Activated T-helper 1 cell treated with anti-CD3 and anti-CD28 coated beads, Interleukin-12 subunit alpha, Interleukin-12 subunit beta, Interleukin-2, Interleukin-4 antibody, amounts not matched to agents 30 ng/mL and 10 ng/mL and 1 ng/mL, durations not matched to agents 14 hours and 24 hours and 36 hours (primary cell): ENCODE measurements at regions of chr5 and their contacts with region 1.

Region 1: GRCh38 chr5:157858527-157859226 is at the start of gene CLINT1:
- DNase-seq: peak; percentile 86
- H3K4me3 Mint-ChIP-seq: peak within 1 kb of the TSS; percentile 90
- H3K27ac Mint-ChIP-seq: peak within 1 kb of the TSS; percentile 92
- H3K4me1 Mint-ChIP-seq: peaks cover 71% of the 10 kb centered on the region
- H3K27me3 Mint-ChIP-seq: no peaks in the 10 kb centered on the region
- total RNA-seq, gene CLINT1: 90.5 and 93.1 TPM in 2 replicates

Region 2: DNA sequence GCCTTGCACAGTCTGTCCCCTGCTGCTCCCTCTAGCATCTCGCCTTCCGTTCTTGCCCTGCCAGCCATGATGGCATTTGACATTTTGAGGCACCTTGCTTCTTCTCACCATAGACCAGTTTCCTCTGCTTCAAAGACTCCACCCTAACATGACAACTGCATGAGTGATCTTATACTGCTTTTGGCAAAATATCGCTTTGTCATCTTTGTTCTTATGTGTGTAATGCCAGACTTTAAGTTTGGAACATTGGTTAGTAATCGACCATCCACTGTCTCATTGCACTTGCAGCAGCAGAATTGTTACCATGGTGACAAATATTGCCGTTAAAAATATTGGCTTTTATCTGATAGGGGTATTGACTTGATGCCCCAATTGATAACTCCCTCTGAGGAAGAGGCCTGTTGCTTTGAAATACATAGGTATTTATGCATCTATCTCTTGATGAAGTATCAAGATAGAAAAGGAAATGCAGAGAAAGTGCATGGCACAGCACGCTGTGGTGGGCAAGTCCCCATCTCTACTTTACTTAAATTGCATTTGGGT is 699.4 kb before region 1 on chr5:
- intact Hi-C with region 1: no loop called
- DNase-seq: no peak
- H3K4me3 Mint-ChIP-seq: peak overlapping the region; percentile 49
- H3K27ac Mint-ChIP-seq: peak overlapping the region; percentile 86
- H3K4me1 Mint-ChIP-seq: peaks cover 64% of the 10 kb centered on the region
- H3K27me3 Mint-ChIP-seq: no peaks in the 10 kb centered on the region

Region 3: GRCh38 chr5:157219491-157220271 is 639.0 kb before region 1 on chr5:
- intact Hi-C with region 1: loop called (anchors 2 kb)
- DNase-seq: peak; percentile 43
- H3K4me3 Mint-ChIP-seq: peak overlapping the region; percentile 41
- H3K27ac Mint-ChIP-seq: peak overlapping the region; percentile 93
- H3K4me1 Mint-ChIP-seq: peaks cover 81% of the 10 kb centered on the region
- H3K27me3 Mint-ChIP-seq: no peaks in the 10 kb centered on the region

Region 4: DNA sequence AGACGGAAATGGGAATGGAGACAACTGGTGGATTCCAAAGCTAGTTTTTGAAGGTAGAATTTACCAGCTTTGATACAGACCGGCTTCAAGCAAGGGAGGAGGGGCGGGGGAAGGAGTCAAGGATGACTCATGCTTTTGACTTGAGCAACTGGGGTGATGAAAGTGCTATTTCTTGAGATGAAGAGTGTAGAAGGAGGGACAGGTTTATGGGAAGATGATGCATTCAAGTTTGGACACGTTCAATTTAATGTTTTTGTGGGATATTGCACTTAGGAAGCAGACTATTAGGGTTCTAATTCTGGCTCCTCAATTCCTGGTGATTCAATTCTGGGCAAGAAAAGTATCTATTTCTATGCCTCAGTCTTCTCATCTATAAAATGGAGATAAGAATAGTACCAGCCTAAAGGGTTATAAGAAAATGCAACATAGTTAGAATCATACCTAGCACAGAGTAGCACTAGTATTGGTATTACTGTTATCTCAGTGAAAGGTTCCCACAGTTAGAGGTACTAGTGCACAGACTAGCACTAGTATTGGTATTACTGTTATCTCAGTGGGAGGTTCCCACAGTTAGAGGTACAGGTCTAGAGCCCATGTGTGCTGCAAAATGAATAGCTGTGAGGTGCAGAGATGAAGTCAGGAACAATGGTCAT is 394.0 kb before region 1 on chr5:
- intact Hi-C with region 1: loop called (anchors 2 kb)
- DNase-seq: peak; percentile 42
- H3K4me3 Mint-ChIP-seq: peak overlapping the region; percentile 36
- H3K27ac Mint-ChIP-seq: peak overlapping the region; percentile 83
- H3K4me1 Mint-ChIP-seq: peaks cover 48% of the 10 kb centered on the region
- H3K27me3 Mint-ChIP-seq: peaks cover 17% of the 10 kb centered on the region

Region 5: GRCh38 chr5:157731272-157732129 is 127.2 kb before region 1 on chr5 and contains the start of gene THG1L:
- intact Hi-C with region 1: loop called (anchors 1 kb)
- DNase-seq: peak; percentile 97
- H3K4me3 Mint-ChIP-seq: peak within 1 kb of the TSS; percentile 88
- H3K27ac Mint-ChIP-seq: peak within 1 kb of the TSS; percentile 97
- H3K4me1 Mint-ChIP-seq: peaks cover 37% of the 10 kb centered on the region
- H3K27me3 Mint-ChIP-seq: no peaks in the 10 kb centered on the region
- total RNA-seq, gene THG1L: 26.8 and 30.1 TPM in 2 replicates

Region 6: GRCh38 chr5:157870837-157871834 is 12.5 kb after region 1 on chr5:
- intact Hi-C with region 1: loop called (anchors 1 kb)
- DNase-seq: no peak
- H3K4me3 Mint-ChIP-seq: no peak overlapping the region
- H3K27ac Mint-ChIP-seq: peak overlapping the region; percentile 64
- H3K4me1 Mint-ChIP-seq: peaks cover 12% of the 10 kb centered on the region
- H3K27me3 Mint-ChIP-seq: no peaks in the 10 kb centered on the region

Region 7: GRCh38 chr5:157948738-157949410 is 90.2 kb after region 1 on chr5:
- intact Hi-C with region 1: loop called (anchors 1 kb)
- DNase-seq: peak; percentile 58
- H3K4me3 Mint-ChIP-seq: no peak overlapping the region
- H3K27ac Mint-ChIP-seq: no peak overlapping the region
- H3K4me1 Mint-ChIP-seq: peaks cover 5% of the 10 kb centered on the region
- H3K27me3 Mint-ChIP-seq: peaks cover 14% of the 10 kb centered on the region

Region 8: GRCh38 chr5:159456722-159457465 is 1598.2 kb after region 1 on chr5:
- intact Hi-C with region 1: loop called (anchors 2 kb)
- DNase-seq: peak; percentile 59
- H3K4me3 Mint-ChIP-seq: peak overlapping the region; percentile 46
- H3K27ac Mint-ChIP-seq: peak overlapping the region; percentile 88
- H3K4me1 Mint-ChIP-seq: peaks cover 50% of the 10 kb centered on the region
- H3K27me3 Mint-ChIP-seq: peaks cover 50% of the 10 kb centered on the region